ENCODE measurements at regions of chr19 and their contacts with region 1.

Region 1: GRCh38 chr19:56076498-56076897 is 44.6 kb downstream of the ZNF787 start:
- DNase-seq: no peak
- H3K4me3 ChIP-seq: no peak overlapping the region
- H3K27ac ChIP-seq: no peak overlapping the region
- H3K4me1 ChIP-seq: peaks cover 7 to 10% (median 9%) of the 10 kb centered on the region in 3 donors
- H3K27me3 ChIP-seq: peaks cover 0 to 10% (median 0%) of the 10 kb centered on the region in 4 donors
- CTCF ChIP-seq: peak; percentile 48 to 87 (median 78)
- POLR2A ChIP-seq: no peak

Region 2: DNA sequence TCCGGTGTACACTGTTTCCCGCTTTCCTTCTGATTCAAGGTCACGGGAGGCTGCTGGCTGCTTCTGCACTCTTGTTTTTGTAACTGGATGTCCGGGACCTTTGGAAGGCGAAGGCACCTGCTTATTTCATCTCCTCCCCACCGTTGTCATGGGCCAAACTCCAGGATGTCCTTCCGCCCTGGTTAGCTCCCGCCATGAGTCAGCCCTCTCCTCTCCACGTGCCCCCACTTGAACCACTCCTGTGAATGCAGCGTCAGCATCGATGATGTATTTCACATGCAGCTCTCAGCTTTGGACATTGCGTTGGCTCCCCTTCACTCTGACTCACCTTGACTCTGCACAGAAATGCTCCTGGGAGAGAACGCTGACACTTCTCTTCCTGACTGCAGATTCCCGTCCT is 93.8 kb after region 1 on chr19:
- intact Hi-C with region 1: loop called (anchors 5 kb)
- DNase-seq: no peak
- H3K4me3 ChIP-seq: no peak overlapping the region
- H3K27ac ChIP-seq: no peak overlapping the region
- H3K4me1 ChIP-seq: peaks cover 0 to 19% (median 0%) of the 10 kb centered on the region in 3 donors
- H3K27me3 ChIP-seq: peaks cover 0 to 24% (median 0%) of the 10 kb centered on the region in 4 donors
- CTCF ChIP-seq: no peak
- POLR2A ChIP-seq: no peak

Region 3: DNA sequence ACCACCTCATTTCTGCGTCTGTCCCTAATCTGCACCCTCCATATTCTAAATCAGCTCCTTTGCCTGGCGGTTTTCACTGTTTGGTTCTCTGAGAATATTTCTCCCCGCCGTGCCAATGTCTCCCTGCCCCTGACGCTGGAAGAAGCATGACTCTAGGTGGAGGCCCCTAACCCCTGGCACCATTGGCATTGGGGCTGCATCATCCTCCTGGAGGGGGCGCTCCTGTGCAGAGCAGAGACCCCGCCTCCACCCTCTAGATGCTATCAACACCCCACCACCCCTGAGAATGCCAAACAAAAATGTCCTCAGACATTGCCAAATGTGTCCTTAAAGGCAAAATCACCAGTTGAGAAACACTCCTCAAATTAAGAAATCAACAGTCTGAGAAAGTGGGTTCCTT is 114.6 kb after region 1 on chr19:
- intact Hi-C with region 1: no loop called
- DNase-seq: no peak
- H3K4me3 ChIP-seq: no peak overlapping the region
- H3K27ac ChIP-seq: no peak overlapping the region
- H3K4me1 ChIP-seq: no peaks in the 10 kb centered on the region
- H3K27me3 ChIP-seq: peaks cover 0 to 10% (median 0%) of the 10 kb centered on the region in 4 donors
- CTCF ChIP-seq: no peak
- POLR2A ChIP-seq: no peak

Region 4: DNA sequence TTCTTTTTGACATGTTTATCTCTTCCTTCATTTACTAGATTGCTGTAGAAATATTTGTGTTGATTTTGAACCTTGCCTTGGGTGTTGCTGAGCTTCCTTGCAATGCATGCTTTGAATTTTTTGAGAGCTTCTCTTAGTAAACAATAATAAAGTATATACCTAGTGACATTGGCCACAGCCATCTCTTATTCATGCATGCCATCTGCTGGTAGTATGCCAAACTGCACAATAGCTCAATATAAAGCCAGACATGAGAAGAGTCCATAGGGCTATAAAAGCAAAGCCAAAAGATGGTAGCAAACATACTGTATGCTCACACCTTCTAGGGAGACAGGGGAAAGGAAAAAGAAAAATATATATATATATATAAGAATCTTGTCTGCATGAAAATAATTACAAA is 257.0 kb after region 1 on chr19:
- intact Hi-C with region 1: loop called (anchors 10 kb)
- DNase-seq: no peak
- H3K4me3 ChIP-seq: no peak overlapping the region
- H3K27ac ChIP-seq: no peak overlapping the region
- H3K4me1 ChIP-seq: no peaks in the 10 kb centered on the region
- H3K27me3 ChIP-seq: no peaks in the 10 kb centered on the region
- CTCF ChIP-seq: peak in 5 of 6 experiments; percentile 44 to 73 (median 55)
- POLR2A ChIP-seq: no peak

Measured in esophagus squamous epithelium (tissue), 5 donors.